ENCODE measurements at regions of chr5 and their contacts with region 1.

Region 1: GRCh38 chr5:173114536-173114935 is 29.8 kb upstream of the BNIP1 start:
- DNase-seq: no peak
- ATAC-seq: no peak
- H3K4me3 ChIP-seq: no peak overlapping the region
- H3K27ac ChIP-seq: no peak overlapping the region
- H3K4me1 ChIP-seq: no peaks in the 10 kb centered on the region
- H3K27me3 ChIP-seq: no peaks in the 10 kb centered on the region
- CTCF ChIP-seq: no peak

Region 2: GRCh38 chr5:173035904-173036707 is 78.4 kb before region 1 on chr5:
- CTCF ChIA-PET with region 1: no interaction called
- POLR2A ChIA-PET with region 1: no interaction called
- intact Hi-C with region 1: no loop called
- DNase-seq: no peak
- ATAC-seq: no peak
- H3K4me3 ChIP-seq: no peak overlapping the region
- H3K27ac ChIP-seq: no peak overlapping the region
- H3K4me1 ChIP-seq: no peaks in the 10 kb centered on the region
- H3K27me3 ChIP-seq: no peaks in the 10 kb centered on the region
- CTCF ChIP-seq: no peak

Region 3: DNA sequence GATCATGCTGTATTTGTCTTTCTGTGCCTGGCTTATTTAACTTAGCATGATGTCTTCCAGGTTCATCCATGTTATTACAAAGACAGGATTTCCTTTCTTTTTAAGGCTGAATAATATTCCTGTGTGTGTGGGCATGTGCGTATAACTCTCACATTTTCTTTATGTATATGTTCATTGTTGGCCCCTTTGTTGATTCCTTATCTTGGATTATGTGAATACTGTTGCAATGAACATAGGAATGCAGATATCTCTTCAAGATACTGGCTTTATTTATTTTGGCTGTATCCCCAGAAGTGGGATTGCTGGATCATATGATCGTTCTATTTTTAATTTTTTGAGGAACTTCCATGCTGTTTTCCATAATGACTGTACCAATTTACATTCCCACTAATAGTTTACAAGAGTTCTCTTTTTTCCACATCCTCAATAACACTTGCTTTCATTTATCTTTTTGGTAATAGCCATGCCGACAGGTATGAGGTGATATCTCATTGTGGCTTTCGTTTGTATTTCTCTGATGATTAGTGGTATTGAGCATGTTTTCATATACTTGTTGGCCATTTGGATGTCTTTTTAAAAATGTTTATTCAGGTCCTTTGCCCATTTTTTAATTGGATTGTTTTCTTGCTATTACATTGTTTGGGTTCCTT is 20.4 kb before region 1 on chr5:
- CTCF ChIA-PET with region 1: no interaction called
- POLR2A ChIA-PET with region 1: no interaction called
- intact Hi-C with region 1: no loop called
- DNase-seq: peak; percentile 61
- ATAC-seq: peak; percentile 78
- H3K4me3 ChIP-seq: no peak overlapping the region
- H3K27ac ChIP-seq: no peak overlapping the region
- H3K4me1 ChIP-seq: peaks cover 12% of the 10 kb centered on the region
- H3K27me3 ChIP-seq: no peaks in the 10 kb centered on the region
- CTCF ChIP-seq: no peak

Region 4: GRCh38 chr5:173602423-173602822 is 487.9 kb after region 1 on chr5:
- CTCF ChIA-PET with region 1: no interaction called
- POLR2A ChIA-PET with region 1: interaction called, 11 read pairs
- intact Hi-C with region 1: no loop called
- DNase-seq: no peak
- ATAC-seq: no peak
- H3K4me3 ChIP-seq: no peak overlapping the region
- H3K27ac ChIP-seq: no peak overlapping the region
- H3K4me1 ChIP-seq: no peaks in the 10 kb centered on the region
- H3K27me3 ChIP-seq: no peaks in the 10 kb centered on the region
- CTCF ChIP-seq: no peak

Measured in PC-3 (cell line).